AG04449 (cell line): ENCODE measurements at regions of chr9 and their contacts with region 1.

Region 1: DNA sequence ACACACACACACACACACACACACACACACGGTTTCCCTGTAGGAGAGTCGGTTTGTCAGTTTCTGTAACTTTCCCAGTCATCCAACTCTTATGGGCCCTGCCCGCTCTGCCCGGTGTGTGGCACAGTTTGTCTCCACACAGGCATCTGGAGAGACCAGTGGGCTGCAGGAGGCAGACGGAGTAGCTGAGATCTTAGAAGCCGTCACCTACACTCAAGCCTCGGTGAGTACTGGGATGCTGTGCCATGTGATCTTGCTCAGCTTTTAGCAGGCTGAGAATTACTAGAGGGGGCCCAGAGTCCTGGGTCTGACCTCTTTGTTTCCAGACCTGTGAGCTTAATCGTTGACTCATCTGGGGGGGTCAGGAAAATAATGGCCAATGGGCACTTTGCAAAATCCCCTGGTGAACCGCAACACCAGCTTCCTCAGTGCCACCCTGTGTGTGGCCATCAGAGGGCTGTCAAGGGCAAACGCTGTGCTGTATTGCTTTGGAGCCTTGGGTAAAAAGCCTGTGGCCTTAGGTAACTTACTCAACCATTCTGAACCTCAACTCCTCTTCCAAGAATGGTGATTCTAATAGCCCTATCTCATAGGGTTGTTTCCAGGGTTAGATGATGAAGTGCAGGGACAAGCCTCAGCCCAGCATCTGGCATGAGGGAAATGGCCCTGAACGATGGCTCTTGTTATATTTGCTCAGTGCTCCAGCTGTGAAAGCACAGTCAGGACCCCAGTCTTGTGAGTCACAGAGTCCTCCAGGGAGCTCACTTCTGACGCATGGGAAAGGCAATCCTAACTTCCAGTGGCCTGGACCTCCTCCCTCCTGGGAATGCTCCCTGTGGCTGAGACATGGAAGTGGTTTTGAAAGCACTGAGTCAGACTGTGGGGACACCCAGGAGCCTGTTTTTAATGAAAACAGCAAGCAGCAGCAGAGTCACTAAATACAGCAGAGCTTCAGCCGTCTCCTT is 45.6 kb downstream of the COL15A1 start:
- DNase-seq: peak; percentile 97
- H3K4me3 ChIP-seq: no peak overlapping the region
- CTCF ChIP-seq: peak; percentile 30

Region 2: DNA sequence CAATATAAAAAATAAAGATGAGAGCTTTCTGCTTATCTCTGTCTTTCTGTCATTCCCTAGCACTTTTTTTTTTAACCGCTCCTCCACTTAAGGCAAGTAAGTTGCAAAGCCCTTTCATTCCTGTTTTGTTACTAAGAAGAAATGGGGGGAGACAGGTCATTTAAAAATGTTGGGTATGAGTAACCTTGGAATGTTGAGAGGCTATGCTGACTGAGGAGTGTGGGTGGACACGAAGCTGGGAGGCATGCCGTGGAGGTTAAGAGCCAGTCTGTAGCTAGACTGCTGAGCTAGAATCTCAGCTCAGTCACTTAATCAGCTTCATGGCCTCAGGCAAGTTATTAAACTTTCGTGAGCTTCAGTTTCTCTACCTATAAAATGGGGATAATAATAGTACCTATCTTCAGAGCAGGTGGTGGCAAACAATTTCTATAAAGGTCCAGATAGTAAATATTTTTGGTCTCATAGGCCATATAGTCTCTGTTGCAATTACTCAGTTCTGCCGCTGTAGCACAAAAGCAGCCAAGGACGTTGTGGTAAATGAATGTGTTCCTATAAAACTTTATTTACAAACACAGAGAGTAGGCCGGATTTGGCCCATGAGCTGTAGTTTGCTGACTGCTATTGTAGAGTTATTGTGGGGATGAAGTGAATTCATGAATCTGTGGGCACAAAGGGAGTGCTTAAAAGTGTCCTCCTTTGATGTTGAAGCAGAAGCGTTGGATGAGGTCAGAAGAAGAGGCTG is 500.6 kb before region 1 on chr9:
- CTCF ChIA-PET with region 1: no interaction called
- POLR2A ChIA-PET with region 1: no interaction called
- DNase-seq: peak; percentile 93
- H3K4me3 ChIP-seq: no peak overlapping the region
- CTCF ChIP-seq: no peak

Region 3: GRCh38 chr9:98860871-98861293 is 128.4 kb before region 1 on chr9:
- CTCF ChIA-PET with region 1: interaction called, 196 read pairs
- POLR2A ChIA-PET with region 1: interaction called, 4 read pairs
- DNase-seq: peak; percentile 73
- H3K4me3 ChIP-seq: no peak overlapping the region
- CTCF ChIP-seq: peak; percentile 66

Region 4: DNA sequence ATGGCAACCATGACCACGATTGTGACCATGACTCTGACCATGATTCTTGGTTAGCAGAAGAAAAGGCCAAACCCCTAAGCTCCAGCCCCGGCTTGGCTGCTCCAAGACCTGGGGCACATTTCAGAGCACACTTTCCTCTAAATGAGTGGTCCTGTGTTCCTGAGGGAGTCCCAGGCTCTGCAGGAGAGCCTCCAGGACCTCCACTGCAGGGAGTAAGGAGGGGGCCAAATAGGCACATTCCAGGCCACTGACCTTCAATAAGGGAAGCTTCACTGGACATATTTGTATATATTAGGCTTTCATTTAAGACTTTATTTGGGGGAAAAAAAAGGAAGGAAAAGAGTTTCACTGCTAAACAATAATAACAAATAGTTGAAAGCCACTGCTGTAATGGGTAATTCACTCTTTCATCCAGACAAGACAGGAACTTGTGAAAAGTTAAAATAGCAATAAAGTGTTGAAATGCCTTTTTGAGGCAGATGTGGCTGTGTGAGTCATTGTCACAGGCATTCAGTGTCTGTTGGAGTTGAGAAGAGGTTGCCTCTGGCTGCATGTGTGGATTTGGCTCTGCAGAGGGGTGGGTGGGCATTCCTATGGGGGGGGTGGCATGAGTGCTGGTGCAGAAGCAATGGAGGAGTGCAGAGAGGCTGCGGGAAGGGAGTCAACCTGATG is 51.7 kb after region 1 on chr9:
- CTCF ChIA-PET with region 1: no interaction called
- POLR2A ChIA-PET with region 1: no interaction called
- DNase-seq: peak; percentile 75
- H3K4me3 ChIP-seq: no peak overlapping the region
- CTCF ChIP-seq: no peak

Region 5: GRCh38 chr9:99192786-99193465 is 203.6 kb after region 1 on chr9:
- CTCF ChIA-PET with region 1: no interaction called
- POLR2A ChIA-PET with region 1: no interaction called
- DNase-seq: no peak
- H3K4me3 ChIP-seq: no peak overlapping the region
- CTCF ChIP-seq: peak; percentile 20